Gastrocnemius medialis (tissue), 4 donors: ENCODE measurements at regions of chr20 and their contacts with region 1.

Region 1: GRCh38 chr20:13373400-13373799 is 152.3 kb downstream of the ISM1 start:
- DNase-seq: no peak
- ATAC-seq: no peak
- H3K4me3 ChIP-seq: no peak overlapping the region
- H3K27ac ChIP-seq: no peak overlapping the region
- H3K4me1 ChIP-seq: no peaks in the 10 kb centered on the region
- H3K27me3 ChIP-seq: no peaks in the 10 kb centered on the region
- CTCF ChIP-seq: no peak
- POLR2A ChIP-seq: no peak

Region 2: DNA sequence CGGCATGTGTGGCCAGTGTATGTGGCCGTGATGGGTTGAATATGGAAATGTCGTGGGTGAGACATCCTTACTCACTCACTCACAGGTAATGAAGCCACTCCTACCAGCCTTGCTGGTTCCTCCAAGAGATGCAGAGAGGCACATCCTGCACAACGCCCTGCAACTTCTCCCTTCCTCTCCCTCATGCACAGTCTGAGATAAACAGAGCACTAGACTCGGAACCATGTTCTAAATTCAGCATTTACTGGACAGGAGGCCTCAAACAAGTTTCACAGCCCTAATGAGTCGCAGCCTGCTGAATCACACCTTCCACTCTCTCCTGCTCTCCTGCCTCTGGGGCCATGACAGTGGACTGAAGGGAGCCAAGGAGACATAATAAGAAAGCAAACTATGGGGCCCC is 61.1 kb before region 1 on chr20:
- in situ Hi-C with region 1: loop called in 1 of 4 experiments (anchors 10 kb)
- intact Hi-C with region 1: no loop called
- DNase-seq: no peak
- ATAC-seq: no peak
- H3K4me3 ChIP-seq: no peak overlapping the region
- H3K27ac ChIP-seq: no peak overlapping the region
- H3K4me1 ChIP-seq: no peaks in the 10 kb centered on the region
- H3K27me3 ChIP-seq: no peaks in the 10 kb centered on the region
- CTCF ChIP-seq: no peak
- POLR2A ChIP-seq: no peak